AG04449 (cell line): ENCODE measurements at regions of chr2 and their contacts with region 1.

Region 1: DNA sequence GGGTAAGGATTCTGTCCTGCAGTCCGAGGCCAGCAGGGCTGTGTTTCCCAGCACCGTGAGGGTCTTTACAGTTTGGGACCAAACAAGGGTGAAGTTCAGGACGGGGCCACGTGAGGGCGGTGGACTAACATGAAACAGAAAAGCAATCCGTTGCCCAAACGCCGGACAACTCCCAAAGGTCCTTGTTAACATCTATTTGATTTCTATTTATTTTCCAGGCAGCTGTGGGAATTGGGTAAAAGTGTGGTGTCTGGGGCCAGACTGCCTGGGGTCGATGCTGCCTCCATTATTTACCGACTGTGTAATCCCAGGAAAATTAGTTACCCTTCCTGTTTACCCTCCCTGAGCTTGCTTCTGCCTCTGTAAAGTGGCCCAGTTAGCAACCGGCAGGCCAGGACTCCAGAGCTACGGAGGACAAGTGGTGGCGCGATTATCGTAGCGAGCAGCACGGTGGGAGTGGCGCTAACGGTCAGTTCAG is 66.3 kb upstream of the TCF7L1 start:
- DNase-seq: no peak
- H3K4me3 ChIP-seq: no peak overlapping the region
- CTCF ChIP-seq: peak; percentile 81

Region 2: DNA sequence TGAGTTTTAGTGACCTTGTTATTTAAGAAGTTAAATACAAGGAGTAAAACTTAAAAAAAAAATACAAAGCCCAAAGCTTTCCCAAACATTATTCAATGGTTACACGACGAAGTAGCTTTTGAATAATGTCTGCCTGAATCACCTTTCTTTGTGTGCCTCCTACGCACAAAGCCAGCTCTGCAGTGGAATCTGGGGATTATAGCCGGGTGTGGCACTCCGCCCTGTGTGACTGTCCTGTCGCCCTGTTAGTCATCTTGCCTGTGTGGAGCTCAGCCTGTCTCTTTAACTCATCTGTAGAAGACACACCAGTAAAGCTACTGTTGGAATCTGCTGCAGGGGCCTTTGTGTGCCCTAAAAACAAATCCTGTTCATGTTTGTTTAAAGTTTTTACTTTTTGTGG is 13.1 kb before region 1 on chr2:
- CTCF ChIA-PET with region 1: interaction called, 18 read pairs
- POLR2A ChIA-PET with region 1: no interaction called
- DNase-seq: no peak
- H3K4me3 ChIP-seq: no peak overlapping the region
- CTCF ChIP-seq: no peak

Region 3: GRCh38 chr2:85089585-85089984 is 22.7 kb after region 1 on chr2:
- CTCF ChIA-PET with region 1: interaction called, 11 read pairs
- POLR2A ChIA-PET with region 1: no interaction called
- DNase-seq: no peak
- H3K4me3 ChIP-seq: no peak overlapping the region
- CTCF ChIP-seq: no peak

Region 4: GRCh38 chr2:85106507-85107215 is 39.7 kb after region 1 on chr2:
- CTCF ChIA-PET with region 1: interaction called, 10 read pairs
- POLR2A ChIA-PET with region 1: no interaction called
- DNase-seq: peak; percentile 59
- H3K4me3 ChIP-seq: no peak overlapping the region
- CTCF ChIP-seq: no peak

Region 5: GRCh38 chr2:85221067-85221691 is 154.3 kb after region 1 on chr2:
- CTCF ChIA-PET with region 1: no interaction called
- POLR2A ChIA-PET with region 1: no interaction called
- DNase-seq: no peak
- H3K4me3 ChIP-seq: no peak overlapping the region
- CTCF ChIP-seq: no peak

Region 6: DNA sequence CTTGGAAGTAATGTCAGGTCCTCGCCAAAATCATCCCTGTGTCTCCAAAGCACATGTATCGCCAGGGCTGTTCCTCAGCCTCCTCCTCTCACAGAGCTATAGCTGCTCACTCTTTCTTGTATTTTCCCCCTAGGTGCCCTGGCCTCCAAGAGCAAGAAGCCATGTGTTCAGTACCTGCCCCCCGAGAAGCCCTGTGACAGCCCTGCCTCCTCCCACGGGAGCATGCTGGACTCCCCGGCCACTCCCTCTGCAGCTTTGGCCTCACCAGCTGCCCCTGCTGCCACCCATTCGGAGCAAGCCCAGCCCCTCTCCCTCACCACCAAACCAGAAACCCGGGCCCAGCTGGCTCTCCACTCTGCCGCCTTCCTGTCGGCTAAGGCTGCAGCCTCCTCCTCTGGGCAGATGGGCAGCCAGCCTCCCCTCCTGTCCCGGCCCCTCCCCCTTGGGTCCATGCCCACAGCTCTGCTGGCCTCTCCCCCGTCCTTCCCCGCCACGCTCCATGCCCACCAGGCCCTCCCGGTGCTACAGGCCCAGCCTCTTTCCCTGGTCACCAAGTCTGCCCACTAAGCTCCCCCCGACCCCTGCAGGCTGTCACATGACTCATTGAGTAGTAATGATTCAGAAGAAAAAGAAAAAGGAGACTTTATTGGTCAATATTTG is 242.1 kb after region 1 on chr2:
- CTCF ChIA-PET with region 1: interaction called, 376 read pairs
- POLR2A ChIA-PET with region 1: no interaction called
- DNase-seq: no peak
- H3K4me3 ChIP-seq: no peak overlapping the region
- CTCF ChIP-seq: no peak